HEK293 (cell line): ENCODE measurements at regions of chrX and their contacts with region 1.

Region 1: GRCh38 chrX:48897621-48898306 is at the starts of genes PQBP1 and TIMM17B:
- H3K4me3 ChIP-seq: peak within 1 kb of the TSS; percentile 79
- H3K27ac ChIP-seq: peak within 1 kb of the TSS; percentile 91
- H3K4me1 ChIP-seq: no peaks in the 10 kb centered on the region
- CTCF ChIP-seq: peak; percentile 20; the same call in 1 of the 2 replicates

Region 2: DNA sequence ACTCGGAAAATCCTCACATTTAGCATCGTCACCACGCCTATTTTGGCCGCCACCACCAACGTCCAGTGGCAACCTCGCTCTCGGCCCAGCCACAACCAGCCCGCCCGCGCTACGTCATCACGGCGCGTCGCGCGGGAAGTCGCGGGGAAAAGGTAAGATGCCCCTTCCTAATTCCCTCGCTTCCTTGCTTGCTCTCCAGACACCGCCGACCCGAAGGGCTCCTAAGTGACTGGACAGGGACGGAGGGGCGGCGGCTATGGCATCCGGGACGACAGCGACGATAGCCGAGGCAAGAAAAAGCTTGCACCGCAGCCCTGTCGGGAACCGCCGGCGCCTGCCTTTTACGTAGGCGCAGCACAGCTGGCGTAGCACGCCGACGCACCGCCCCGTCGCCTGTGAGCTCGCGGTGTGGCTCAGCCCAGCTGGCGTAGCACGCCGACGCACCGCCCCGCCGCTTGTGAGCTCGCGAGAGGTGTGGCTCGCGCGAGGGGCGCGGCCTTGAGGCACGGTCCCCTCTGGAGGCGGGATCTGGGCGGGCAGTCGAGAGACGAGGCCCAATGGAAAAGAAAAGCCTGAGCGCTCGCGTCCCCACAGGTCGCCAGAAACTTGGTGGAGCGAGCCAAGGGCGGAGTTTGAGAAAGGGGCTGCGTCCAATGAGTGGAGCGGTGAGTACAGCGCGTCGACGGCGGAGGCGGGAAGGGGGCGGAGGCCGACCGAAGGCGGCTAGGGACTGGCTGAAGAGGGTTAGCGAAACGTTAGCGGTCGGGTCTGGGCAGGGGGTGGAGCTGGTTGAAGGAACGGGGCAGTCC is 96.3 kb before region 1 on chrX and contains the start of gene HDAC6:
- CTCF ChIA-PET with region 1: interaction called, 6 read pairs
- POLR2A ChIA-PET with region 1: interaction called, 11 read pairs
- H3K4me3 ChIP-seq: peak within 1 kb of the TSS; percentile 80
- H3K27ac ChIP-seq: peak within 1 kb of the TSS; percentile 85
- H3K4me1 ChIP-seq: peaks cover 4% of the 10 kb centered on the region; the same call in 1 of the 2 replicates
- CTCF ChIP-seq: no peak

Region 3: GRCh38 chrX:48835524-48836329 is 62.0 kb before region 1 on chrX and contains the start of gene PCSK1N:
- CTCF ChIA-PET with region 1: interaction called, 3 read pairs
- POLR2A ChIA-PET with region 1: interaction called, 10 read pairs
- H3K4me3 ChIP-seq: peak within 1 kb of the TSS; percentile 61
- H3K27ac ChIP-seq: peak within 1 kb of the TSS; percentile 41; the same call in 1 of the 2 replicates
- H3K4me1 ChIP-seq: no peaks in the 10 kb centered on the region
- CTCF ChIP-seq: no peak

Region 4: DNA sequence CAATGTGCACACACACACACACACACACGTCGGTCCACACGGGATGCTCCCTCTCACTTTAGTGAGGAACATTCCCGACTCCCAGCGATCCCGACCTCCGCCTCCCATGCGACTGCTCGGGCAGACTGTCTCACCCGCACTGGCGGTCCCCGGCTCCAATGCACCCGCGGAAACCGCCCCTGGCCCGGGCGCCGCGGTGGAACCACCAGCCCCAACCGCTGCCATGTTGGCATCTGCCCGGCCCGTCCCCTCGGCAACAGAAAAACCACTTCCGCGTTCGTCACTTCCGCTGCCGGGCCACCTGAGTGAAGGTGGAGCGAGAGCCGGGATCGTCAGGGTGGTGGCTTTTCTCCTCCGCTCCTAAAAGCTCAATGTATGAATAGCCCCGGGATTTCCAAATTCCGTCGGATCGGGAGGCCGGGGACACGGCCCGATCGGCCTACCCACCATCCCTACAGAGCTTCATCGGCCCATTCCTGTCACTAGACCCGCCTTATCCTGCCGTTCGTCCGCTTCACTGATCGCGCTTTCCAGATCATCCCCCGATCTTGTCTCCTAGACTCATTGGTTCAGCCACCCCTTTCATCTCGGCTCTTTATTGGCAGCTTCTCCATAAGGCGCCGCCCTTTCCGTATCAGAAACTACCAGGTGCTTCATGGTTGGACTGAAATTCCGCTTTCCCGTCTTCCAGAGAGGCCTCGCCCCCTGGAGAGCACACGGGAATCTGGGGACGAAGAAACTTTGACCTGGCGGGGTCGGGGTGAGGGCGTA is 13.8 kb after region 1 on chrX and contains the start of gene SLC35A2:
- CTCF ChIA-PET with region 1: interaction called, 3 read pairs
- POLR2A ChIA-PET with region 1: interaction called, 21 read pairs
- H3K4me3 ChIP-seq: peak within 1 kb of the TSS; percentile 81
- H3K27ac ChIP-seq: peak within 1 kb of the TSS; percentile 30; the same call in 1 of the 2 replicates
- H3K4me1 ChIP-seq: no peaks in the 10 kb centered on the region
- CTCF ChIP-seq: no peak

Region 5: GRCh38 chrX:49725923-49726904 is 828.5 kb after region 1 on chrX:
- CTCF ChIA-PET with region 1: no interaction called
- POLR2A ChIA-PET with region 1: no interaction called
- H3K4me3 ChIP-seq: no peak overlapping the region
- H3K27ac ChIP-seq: no peak overlapping the region
- H3K4me1 ChIP-seq: no peaks in the 10 kb centered on the region
- CTCF ChIP-seq: no peak